ENCODE measurements at regions of chr4 and their contacts with region 1.

Region 1: GRCh38 chr4:185005216-185005819 is 13.0 kb upstream of the HELT start:
- DNase-seq: peak; percentile 83
- H3K4me3 ChIP-seq: peak overlapping the region; percentile 31
- H3K27ac ChIP-seq: no peak overlapping the region
- H3K4me1 ChIP-seq: peaks cover 6% of the 10 kb centered on the region
- CTCF ChIP-seq: peak; percentile 97

Region 2: GRCh38 chr4:183971929-183972490 is 1033.3 kb before region 1 on chr4:
- CTCF ChIA-PET with region 1: no interaction called
- POLR2A ChIA-PET with region 1: no interaction called
- intact Hi-C with region 1: no loop called
- DNase-seq: no peak
- H3K4me3 ChIP-seq: no peak overlapping the region
- H3K27ac ChIP-seq: no peak overlapping the region
- H3K4me1 ChIP-seq: no peaks in the 10 kb centered on the region
- CTCF ChIP-seq: no peak

Region 3: GRCh38 chr4:185134307-185134869 is 129.1 kb after region 1 on chr4:
- CTCF ChIA-PET with region 1: no interaction called
- POLR2A ChIA-PET with region 1: no interaction called
- intact Hi-C with region 1: loop called (anchors 1 kb)
- DNase-seq: peak; percentile 71
- H3K4me3 ChIP-seq: no peak overlapping the region
- H3K27ac ChIP-seq: no peak overlapping the region
- H3K4me1 ChIP-seq: no peaks in the 10 kb centered on the region
- CTCF ChIP-seq: peak; percentile 96

Measured in OCI-LY7 (cell line).